ENCODE measurements at regions of chr6 and their contacts with region 1.

Region 1: DNA sequence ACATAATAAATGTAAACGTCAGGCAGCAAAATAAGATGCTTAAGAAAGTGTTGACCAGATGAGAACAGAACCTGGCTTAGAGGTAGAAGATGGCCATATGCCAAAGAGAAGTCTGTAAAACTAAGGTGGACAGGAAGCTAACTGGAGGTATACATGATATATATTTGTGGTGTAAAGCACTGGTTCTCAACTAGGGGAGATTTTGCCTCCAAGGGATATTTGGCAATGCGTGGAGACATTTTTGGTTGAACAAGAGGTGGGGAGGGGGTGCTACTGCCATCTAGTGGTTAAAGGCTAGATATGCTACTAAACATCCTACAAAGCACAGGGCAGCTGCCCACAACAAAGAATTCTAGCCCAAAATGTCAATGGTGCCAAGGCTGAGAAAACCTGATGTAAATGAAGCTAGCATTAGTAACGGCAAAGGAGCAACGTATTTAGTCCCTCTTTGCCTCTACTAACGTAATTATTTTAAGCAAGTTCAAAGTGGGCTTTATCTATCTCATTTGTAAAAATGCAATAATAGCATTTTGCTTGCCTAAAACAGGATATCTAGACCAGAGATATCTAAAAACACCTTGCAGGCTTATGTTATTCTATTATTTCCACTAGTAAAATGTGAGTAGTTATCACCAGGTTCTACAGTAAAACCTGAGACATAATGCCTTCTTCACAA is 182.6 kb downstream of the RNGTT start:
- DNase-seq: peak; percentile 91
- H3K4me3 Mint-ChIP-seq: no peak overlapping the region
- H3K27ac Mint-ChIP-seq: no peak overlapping the region
- H3K4me1 Mint-ChIP-seq: peaks cover 5% of the 10 kb centered on the region
- H3K27me3 Mint-ChIP-seq: no peaks in the 10 kb centered on the region
- CTCF ChIP-seq: peak; percentile 70

Region 2: DNA sequence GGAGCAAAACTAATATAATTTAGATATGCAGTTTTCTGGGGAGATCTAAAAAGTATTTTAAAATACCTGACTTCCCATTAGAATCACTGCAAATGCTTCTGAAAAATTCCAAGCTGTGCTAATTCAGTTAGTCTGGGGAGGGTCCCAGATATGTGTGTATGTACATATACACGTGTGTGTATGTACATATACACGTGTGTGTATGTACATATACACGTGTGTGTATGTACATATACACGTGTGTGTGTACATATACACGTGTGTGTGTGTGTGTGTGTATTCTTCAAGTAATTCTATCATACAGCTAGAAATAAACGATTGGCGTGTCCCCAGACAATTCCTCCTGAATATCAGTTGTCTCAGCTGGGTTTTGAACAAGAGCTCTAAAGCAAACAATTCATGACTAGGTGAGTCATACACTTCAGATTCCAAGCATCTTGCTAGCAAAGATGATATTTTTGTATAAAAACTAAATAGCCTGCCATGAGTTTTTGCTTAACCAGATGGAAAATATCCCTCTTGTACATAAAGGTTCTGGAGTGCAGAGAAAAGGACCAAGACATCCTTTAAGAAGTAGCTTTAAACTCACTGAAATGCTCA is 675.0 kb before region 1 on chr6:
- CTCF ChIA-PET with region 1: no interaction called
- POLR2A ChIA-PET with region 1: no interaction called
- intact Hi-C with region 1: loop called (anchors 5 kb)
- DNase-seq: no peak
- H3K4me3 Mint-ChIP-seq: no peak overlapping the region
- H3K27ac Mint-ChIP-seq: no peak overlapping the region
- H3K4me1 Mint-ChIP-seq: no peaks in the 10 kb centered on the region
- H3K27me3 Mint-ChIP-seq: peaks cover 1% of the 10 kb centered on the region
- CTCF ChIP-seq: no peak

Region 3: GRCh38 chr6:88492824-88493223 is 288.0 kb before region 1 on chr6:
- CTCF ChIA-PET with region 1: interaction called, 12 read pairs
- POLR2A ChIA-PET with region 1: no interaction called
- intact Hi-C with region 1: loop called (anchors 10 kb)
- DNase-seq: peak; percentile 46
- H3K4me3 Mint-ChIP-seq: no peak overlapping the region
- H3K27ac Mint-ChIP-seq: no peak overlapping the region
- H3K4me1 Mint-ChIP-seq: peaks cover 23% of the 10 kb centered on the region
- H3K27me3 Mint-ChIP-seq: no peaks in the 10 kb centered on the region
- CTCF ChIP-seq: peak; percentile 64

Region 4: GRCh38 chr6:89375427-89376267 is 594.8 kb after region 1 on chr6:
- CTCF ChIA-PET with region 1: no interaction called
- POLR2A ChIA-PET with region 1: no interaction called
- intact Hi-C with region 1: no loop called
- DNase-seq: peak; percentile 57
- H3K4me3 Mint-ChIP-seq: no peak overlapping the region
- H3K27ac Mint-ChIP-seq: no peak overlapping the region
- H3K4me1 Mint-ChIP-seq: no peaks in the 10 kb centered on the region
- H3K27me3 Mint-ChIP-seq: no peaks in the 10 kb centered on the region
- CTCF ChIP-seq: no peak

Measured in MCF 10A (cell line).